Right ventricle myocardium inferior (tissue), 1 donor: ENCODE measurements at regions of chr17 and their contacts with region 1.

Region 1: DNA sequence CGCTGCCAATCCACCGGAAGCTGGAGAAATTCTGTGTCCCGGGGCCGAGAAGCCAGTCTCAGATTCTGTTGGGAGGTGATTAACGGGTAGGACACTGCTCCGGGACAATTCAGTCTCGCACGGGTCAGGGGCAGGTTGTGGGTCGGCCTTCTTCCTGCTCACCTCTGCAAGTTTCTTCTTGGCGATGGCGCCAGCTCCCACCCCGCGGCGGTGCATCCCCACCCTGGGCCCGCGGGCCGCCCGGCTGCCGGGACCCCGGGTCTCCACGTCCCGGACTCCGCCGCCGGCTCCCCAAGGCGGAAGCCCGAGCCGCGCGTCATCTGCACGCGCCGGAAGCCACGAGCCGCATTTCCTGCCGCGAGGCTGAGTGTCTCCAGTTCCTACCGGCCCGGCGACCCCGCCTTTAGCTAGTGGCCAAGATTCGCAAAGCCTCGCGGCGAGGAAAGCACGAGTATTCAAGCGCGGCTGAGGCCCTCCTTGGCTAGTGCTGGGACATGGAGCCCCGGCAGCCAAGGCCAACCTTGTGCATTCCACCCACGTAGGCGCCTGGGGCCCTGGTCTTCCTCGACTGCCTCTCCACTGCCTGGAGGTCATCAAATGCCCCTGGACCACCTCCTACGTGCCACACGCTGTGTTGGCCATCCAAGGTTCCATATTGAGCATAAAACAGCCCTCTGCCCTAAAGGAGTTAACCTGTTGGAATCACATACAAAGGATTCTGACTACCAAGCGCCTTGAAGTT is at the start of gene SNF8:
- DNase-seq: peak; percentile 97
- ATAC-seq: peak; percentile 96
- total RNA-seq, gene SNF8: 104 TPM

Region 2: DNA sequence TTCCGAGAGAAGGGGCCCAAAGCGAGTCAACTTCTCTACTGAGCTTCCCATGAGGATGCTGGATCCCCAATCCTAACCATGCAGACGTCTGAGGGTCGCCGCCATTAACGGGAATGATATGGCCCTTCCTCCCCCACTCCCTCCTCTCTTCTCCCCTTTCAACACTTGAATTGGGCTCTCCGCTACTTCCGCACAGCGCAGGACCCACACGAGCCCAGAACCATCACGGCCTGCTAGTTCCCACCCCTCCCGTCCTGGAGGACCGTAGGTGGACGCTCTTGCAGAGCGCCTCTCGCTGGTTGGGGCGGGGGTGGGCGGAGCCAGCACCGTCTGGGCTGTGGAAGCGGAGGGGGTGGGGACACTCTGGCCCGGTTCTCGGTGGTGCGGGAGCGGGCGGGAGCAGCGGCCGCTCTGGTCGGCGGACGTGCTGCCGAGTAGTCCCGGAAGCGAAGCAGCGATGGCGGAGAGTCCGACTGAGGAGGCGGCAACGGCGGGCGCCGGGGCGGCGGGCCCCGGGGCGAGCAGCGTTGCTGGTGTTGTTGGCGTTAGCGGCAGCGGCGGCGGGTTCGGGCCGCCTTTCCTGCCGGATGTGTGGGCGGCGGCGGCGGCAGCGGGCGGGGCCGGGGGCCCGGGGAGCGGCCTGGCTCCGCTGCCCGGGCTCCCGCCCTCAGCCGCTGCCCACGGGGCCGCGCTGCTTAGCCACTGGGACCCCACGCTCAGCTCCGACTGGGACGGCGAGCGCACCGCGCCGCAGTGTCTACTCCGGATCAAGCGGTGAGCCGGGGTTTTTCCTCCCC is 36.4 kb before region 1 on chr17 and contains the start of gene UBE2Z:
- intact Hi-C with region 1: loop called (anchors 5 kb)
- DNase-seq: peak; percentile 95
- ATAC-seq: peak; percentile 98
- total RNA-seq, gene UBE2Z: 37.4 TPM